ENCODE measurements at regions of chr20 and their contacts with region 1.

Region 1: DNA sequence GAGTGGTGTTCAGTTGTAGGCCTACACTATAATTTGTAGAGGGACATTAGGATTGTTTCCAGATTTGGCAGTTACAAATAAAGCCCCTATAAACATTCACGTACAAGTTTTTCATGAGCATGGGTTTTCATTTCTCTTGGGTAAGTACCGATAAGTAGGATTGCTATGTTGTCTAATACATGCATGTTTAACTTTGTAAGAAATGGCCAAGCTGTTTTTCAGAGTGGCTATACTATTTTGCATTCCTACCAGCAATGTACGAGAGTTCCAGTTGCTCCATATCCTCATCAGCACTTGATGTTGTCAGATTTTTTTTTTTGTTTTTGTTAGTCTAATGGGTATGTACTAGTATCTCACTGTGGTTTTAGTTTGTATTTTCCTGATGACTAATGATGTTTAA is 11.2 kb upstream of the APCDD1L start:
- DNase-seq: no peak
- H3K4me3 ChIP-seq: no peak overlapping the region
- H3K27me3 ChIP-seq: no peaks in the 10 kb centered on the region
- CTCF ChIP-seq: no peak

Region 2: GRCh38 chr20:58542411-58543095 is 16.1 kb after region 1 on chr20:
- CTCF ChIA-PET with region 1: no interaction called
- POLR2A ChIA-PET with region 1: no interaction called
- DNase-seq: no peak
- H3K4me3 ChIP-seq: no peak overlapping the region
- H3K27me3 ChIP-seq: no peaks in the 10 kb centered on the region
- CTCF ChIP-seq: no peak

Region 3: GRCh38 chr20:58658469-58659159 is 132.2 kb after region 1 on chr20:
- CTCF ChIA-PET with region 1: interaction called, 10 read pairs
- POLR2A ChIA-PET with region 1: no interaction called
- DNase-seq: no peak
- H3K4me3 ChIP-seq: no peak overlapping the region
- H3K27me3 ChIP-seq: no peaks in the 10 kb centered on the region
- CTCF ChIP-seq: no peak